Activated naive CD4-positive, alpha-beta T cell treated with anti-CD3 and anti-CD28 coated beads for 36 hours (primary cell): ENCODE measurements at regions of chr17 and their contacts with region 1.

Region 1: GRCh38 chr17:8630802-8631553 is 453 bp upstream of the MYH10 start:
- DNase-seq: peak; percentile 97
- H3K4me3 Mint-ChIP-seq: peak overlapping the region; percentile 94
- H3K27ac Mint-ChIP-seq: no peak overlapping the region
- H3K4me1 Mint-ChIP-seq: peaks cover 4% of the 10 kb centered on the region
- H3K27me3 Mint-ChIP-seq: peaks cover 40% of the 10 kb centered on the region

Region 2: DNA sequence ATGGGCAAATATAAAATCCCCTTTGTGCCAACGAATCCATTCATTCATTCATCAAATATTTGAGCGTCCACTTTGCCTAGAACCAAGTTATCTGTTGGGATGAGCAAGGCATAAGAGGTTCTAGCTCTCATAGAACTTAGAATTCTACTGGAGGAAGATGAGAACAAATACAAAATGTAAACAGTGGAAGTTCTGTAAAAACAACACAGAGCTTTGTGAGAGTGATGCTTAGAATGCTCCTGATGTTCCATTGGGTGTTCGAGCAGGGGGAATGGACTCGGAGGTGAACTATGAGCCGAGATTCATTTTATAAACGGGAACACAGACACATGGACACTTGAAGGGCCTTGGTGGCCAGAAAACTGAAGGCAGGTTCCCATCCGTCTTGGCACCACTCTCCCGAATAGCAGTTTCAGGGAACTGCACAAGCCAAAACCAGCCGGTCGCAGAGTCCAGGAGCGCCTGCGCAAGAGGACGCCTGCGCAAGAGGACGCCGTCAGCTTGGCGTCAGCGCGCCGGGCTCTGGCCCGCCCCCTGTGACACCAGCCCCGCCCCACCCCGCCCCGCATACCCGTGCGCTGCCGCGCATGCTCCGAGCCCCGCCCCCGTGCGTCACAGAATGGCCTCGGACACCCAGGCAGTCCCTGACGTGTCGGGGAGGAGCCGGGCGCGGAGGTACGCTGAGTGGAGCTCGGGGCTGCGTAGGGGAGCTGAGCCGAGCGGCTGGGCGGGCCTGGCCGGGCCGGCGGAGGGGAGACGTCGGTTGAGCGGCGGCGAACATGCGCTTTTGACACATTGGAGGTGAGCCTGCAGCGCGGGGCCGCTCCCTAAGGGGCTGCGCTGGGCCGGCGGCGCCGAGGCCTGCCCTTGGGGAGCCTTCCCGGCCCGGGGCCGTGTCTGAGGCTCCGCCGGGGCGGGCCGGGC is 195.5 kb before region 1 on chr17 and contains the start of gene NDEL1:
- CTCF ChIA-PET with region 1: no interaction called
- intact Hi-C with region 1: loop called (anchors 1 kb)
- DNase-seq: peak; percentile 99
- H3K4me3 Mint-ChIP-seq: peak within 1 kb of the TSS; percentile 96
- H3K27ac Mint-ChIP-seq: peak within 1 kb of the TSS; percentile 93
- H3K4me1 Mint-ChIP-seq: peaks cover 32% of the 10 kb centered on the region
- H3K27me3 Mint-ChIP-seq: no peaks in the 10 kb centered on the region
- total RNA-seq, gene NDEL1: 43.1 to 47.1 TPM

Region 3: DNA sequence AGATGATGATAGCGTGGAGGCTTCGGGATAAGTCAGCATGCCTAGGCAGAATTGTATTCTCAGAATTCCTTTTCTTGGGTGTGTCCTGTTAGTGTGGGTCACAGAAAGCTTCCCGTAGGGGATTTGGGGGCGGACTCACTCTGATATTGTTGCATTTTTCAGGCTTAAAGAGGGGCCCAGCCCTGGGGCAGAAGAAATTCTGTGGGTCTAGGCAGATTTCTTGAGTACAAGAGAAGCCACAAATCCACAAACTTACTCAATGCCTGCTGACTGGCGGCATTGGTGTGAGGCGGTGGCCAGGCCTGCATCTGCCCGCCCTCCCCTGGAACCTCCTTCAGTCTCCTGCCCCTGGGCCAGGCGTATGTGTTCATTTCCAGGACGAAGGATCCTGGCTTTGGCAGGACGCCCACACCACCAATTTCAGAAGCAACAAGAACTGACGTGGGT is 96.1 kb after region 1 on chr17:
- CTCF ChIA-PET with region 1: no interaction called
- intact Hi-C with region 1: no loop called
- DNase-seq: no peak
- H3K4me3 Mint-ChIP-seq: no peak overlapping the region
- H3K27ac Mint-ChIP-seq: no peak overlapping the region
- H3K4me1 Mint-ChIP-seq: no peaks in the 10 kb centered on the region
- H3K27me3 Mint-ChIP-seq: no peaks in the 10 kb centered on the region